Activated B cell treated with CpG ODN at 0.5 μM for 24 hours (primary cell): ENCODE measurements at regions of chr5 and their contacts with region 1.

Region 1: DNA sequence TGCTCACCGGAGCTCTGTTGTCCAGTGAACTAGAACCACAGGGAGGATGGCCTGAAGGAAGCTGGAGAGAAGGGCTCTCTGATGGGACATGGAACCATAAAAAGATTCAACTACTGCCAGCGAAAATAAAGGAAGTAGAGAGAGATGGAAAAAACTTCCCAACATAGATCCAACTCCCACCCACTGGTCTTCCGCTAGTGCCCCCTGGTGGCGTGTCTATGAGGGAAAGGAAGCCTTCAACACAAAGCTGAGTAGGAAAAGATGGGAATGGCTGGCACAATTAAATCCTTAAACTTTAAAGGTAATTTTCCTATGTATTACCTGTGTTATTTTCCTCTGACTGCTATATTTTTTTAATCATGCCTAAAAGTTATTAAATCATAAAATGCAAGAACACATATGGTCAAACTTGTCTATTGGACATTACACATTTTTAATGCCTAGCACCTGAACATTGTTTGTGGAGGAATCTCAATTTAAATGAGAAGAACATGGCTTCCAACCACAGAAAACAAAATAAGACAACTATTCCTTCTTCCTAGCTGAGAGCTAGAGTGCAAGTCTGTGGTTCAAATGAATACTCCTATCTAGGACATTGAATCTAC is 51.5 kb downstream of the CEP120 start:
- DNase-seq: peak; percentile 21
- ATAC-seq: no peak
- H3K4me3 Mint-ChIP-seq: no peak overlapping the region
- H3K27ac Mint-ChIP-seq: no peak overlapping the region
- H3K4me1 Mint-ChIP-seq: no peaks in the 10 kb centered on the region
- H3K27me3 Mint-ChIP-seq: no peaks in the 10 kb centered on the region
- CTCF ChIP-seq: peak; percentile 31

Region 2: GRCh38 chr5:122192497-122193496 is 1178.9 kb before region 1 on chr5:
- CTCF ChIA-PET with region 1: no interaction called
- POLR2A ChIA-PET with region 1: no interaction called
- intact Hi-C with region 1: loop called (anchors 5 kb)
- DNase-seq: no peak
- ATAC-seq: peak; percentile 42
- H3K4me3 Mint-ChIP-seq: no peak overlapping the region
- H3K27ac Mint-ChIP-seq: no peak overlapping the region
- H3K4me1 Mint-ChIP-seq: no peaks in the 10 kb centered on the region
- H3K27me3 Mint-ChIP-seq: peaks cover 17% of the 10 kb centered on the region
- CTCF ChIP-seq: no peak

Region 3: GRCh38 chr5:122458278-122458872 is 913.3 kb before region 1 on chr5:
- CTCF ChIA-PET with region 1: no interaction called
- POLR2A ChIA-PET with region 1: no interaction called
- intact Hi-C with region 1: loop called (anchors 2 kb)
- DNase-seq: no peak
- ATAC-seq: no peak
- H3K4me3 Mint-ChIP-seq: no peak overlapping the region
- H3K27ac Mint-ChIP-seq: no peak overlapping the region
- H3K4me1 Mint-ChIP-seq: no peaks in the 10 kb centered on the region
- H3K27me3 Mint-ChIP-seq: peaks cover 15% of the 10 kb centered on the region
- CTCF ChIP-seq: peak; percentile 27

Region 4: DNA sequence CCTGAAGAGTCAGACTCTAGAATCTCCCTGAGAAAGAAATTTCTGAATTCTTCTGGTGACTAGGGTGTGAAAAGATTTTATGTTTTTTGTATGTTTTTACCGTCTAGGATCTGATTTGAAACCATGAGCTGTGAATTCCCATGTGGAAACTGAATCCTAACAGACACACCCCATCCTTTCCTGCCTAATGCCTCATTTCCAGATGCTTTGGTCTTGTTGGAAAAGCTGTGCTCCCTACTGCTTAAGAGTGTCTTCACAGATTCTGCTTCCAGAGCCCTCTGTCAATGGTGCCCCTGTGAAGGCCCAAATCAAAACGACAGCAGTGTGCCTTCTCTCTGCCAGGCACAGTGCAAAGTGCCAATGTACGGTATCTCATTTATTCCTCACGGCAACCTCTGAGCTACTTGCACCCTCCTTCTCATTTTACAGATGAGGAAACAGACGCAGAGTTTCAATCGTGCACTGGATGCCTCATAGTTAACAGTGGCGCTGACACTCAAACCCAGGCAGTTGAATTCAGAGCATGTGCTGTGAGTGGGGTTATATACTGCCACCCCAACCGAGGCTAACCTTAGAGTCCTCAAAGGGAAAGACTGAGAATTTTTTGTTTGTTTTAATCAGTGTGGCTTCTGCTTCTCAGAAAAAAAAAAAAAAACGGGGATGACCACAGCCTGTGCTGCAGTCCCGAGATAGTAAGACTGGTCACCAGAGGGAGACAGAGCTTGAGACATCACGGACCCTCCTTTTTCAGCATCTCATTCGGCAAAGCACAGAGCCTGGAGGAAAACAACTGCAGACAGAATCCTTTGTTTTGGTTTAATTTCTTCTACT is 871.2 kb before region 1 on chr5:
- CTCF ChIA-PET with region 1: no interaction called
- POLR2A ChIA-PET with region 1: no interaction called
- intact Hi-C with region 1: loop called (anchors 1 kb)
- DNase-seq: no peak
- ATAC-seq: no peak
- H3K4me3 Mint-ChIP-seq: no peak overlapping the region
- H3K27ac Mint-ChIP-seq: no peak overlapping the region
- H3K4me1 Mint-ChIP-seq: no peaks in the 10 kb centered on the region
- H3K27me3 Mint-ChIP-seq: peaks cover 7% of the 10 kb centered on the region
- CTCF ChIP-seq: no peak

Region 5: GRCh38 chr5:122816756-122817155 is 554.9 kb before region 1 on chr5:
- CTCF ChIA-PET with region 1: no interaction called
- POLR2A ChIA-PET with region 1: no interaction called
- intact Hi-C with region 1: loop called (anchors 10 kb)
- DNase-seq: no peak
- ATAC-seq: no peak
- H3K4me3 Mint-ChIP-seq: no peak overlapping the region
- H3K27ac Mint-ChIP-seq: no peak overlapping the region
- H3K4me1 Mint-ChIP-seq: no peaks in the 10 kb centered on the region
- H3K27me3 Mint-ChIP-seq: no peaks in the 10 kb centered on the region
- CTCF ChIP-seq: no peak

Region 6: DNA sequence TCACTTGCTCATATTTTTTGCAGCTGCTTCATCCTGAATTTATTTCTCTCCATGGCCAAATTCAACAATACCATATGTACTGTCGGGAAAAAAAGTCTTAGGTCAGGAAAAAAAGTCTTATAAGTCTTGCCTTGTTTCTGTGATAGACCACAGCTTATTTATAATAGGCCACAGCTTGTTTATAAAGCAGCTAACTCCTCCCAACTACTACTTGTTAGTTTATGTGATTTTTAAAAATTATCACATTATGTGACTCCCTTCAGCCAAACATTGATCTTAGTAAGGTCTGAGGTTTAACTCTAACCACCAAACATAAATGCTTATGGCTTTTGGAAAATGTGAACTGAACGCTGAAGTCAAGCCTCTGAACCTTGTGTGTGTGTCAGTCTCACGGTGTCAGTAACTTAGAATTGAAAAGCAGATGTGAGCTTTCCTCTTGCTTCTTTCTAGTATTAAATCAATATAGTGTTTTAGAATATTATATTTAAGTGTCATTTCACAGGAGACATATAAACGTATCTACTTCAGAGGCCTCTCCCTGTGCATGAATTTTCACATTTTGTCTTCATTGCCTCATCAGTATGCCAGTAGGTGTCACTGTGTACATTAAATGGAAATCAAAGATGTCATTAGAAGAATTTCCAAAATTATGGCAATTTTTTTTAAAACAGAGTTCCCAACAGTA is 474.9 kb before region 1 on chr5:
- CTCF ChIA-PET with region 1: interaction called, 3 read pairs
- POLR2A ChIA-PET with region 1: no interaction called
- intact Hi-C with region 1: loop called (anchors 5 kb)
- DNase-seq: no peak
- ATAC-seq: no peak
- H3K4me3 Mint-ChIP-seq: no peak overlapping the region
- H3K27ac Mint-ChIP-seq: no peak overlapping the region
- H3K4me1 Mint-ChIP-seq: no peaks in the 10 kb centered on the region
- H3K27me3 Mint-ChIP-seq: no peaks in the 10 kb centered on the region
- CTCF ChIP-seq: no peak

Region 7: GRCh38 chr5:123414975-123415374 is 43.3 kb after region 1 on chr5:
- CTCF ChIA-PET with region 1: no interaction called
- POLR2A ChIA-PET with region 1: no interaction called
- intact Hi-C with region 1: no loop called
- DNase-seq: no peak
- ATAC-seq: no peak
- H3K4me3 Mint-ChIP-seq: no peak overlapping the region
- H3K27ac Mint-ChIP-seq: peak overlapping the region; percentile 13
- H3K4me1 Mint-ChIP-seq: peaks cover 12% of the 10 kb centered on the region
- H3K27me3 Mint-ChIP-seq: no peaks in the 10 kb centered on the region
- CTCF ChIP-seq: no peak